Activated CD4-positive, alpha-beta T cell treated with anti-CD3 and anti-CD28 coated beads for 36 hours (primary cell): ENCODE measurements at regions of chr6 and their contacts with region 1.

Region 1: GRCh38 chr6:36623547-36624459 is 29.6 kb downstream of the SRSF3 start:
- DNase-seq: peak; percentile 86
- ATAC-seq: peak; percentile 82
- H3K4me3 Mint-ChIP-seq: no peak overlapping the region
- H3K27ac Mint-ChIP-seq: peak overlapping the region; percentile 45
- H3K4me1 Mint-ChIP-seq: peaks cover 18% of the 10 kb centered on the region
- H3K27me3 Mint-ChIP-seq: no peaks in the 10 kb centered on the region

Region 2: DNA sequence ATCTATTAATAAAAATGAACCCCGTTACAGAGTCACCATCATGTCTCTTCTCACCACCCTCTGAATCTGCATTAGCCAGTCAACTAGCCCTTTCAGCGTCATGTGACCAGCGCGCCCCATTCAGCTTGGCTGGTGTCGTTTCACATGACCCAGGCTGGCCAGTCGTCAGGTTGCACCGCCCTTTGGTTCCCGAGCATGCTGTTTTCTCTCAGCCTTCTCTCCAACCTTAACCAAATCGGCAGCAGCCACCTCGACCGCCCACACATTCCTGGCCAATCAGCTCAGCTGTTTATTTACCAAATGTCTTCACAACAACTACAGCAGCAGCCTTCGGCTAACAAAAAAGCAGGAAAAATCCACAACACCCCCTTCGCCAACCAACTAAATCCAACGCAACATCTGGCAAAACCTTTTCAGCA is 24.0 kb before region 1 on chr6:
- CTCF ChIA-PET with region 1: no interaction called
- POLR2A ChIA-PET with region 1: no interaction called
- intact Hi-C with region 1: no loop called
- DNase-seq: peak; percentile 86
- ATAC-seq: peak; percentile 91
- H3K4me3 Mint-ChIP-seq: peak overlapping the region; percentile 88
- H3K27ac Mint-ChIP-seq: peak overlapping the region; percentile 90
- H3K4me1 Mint-ChIP-seq: peaks cover 66% of the 10 kb centered on the region
- H3K27me3 Mint-ChIP-seq: no peaks in the 10 kb centered on the region

Region 3: GRCh38 chr6:36724514-36725390 is 100.9 kb after region 1 on chr6:
- CTCF ChIA-PET with region 1: interaction called, 5 read pairs
- POLR2A ChIA-PET with region 1: no interaction called
- intact Hi-C with region 1: loop called (anchors 1 to 2 kb)
- DNase-seq: peak; percentile 82
- ATAC-seq: peak; percentile 45
- H3K4me3 Mint-ChIP-seq: no peak overlapping the region
- H3K27ac Mint-ChIP-seq: no peak overlapping the region
- H3K4me1 Mint-ChIP-seq: peaks cover 25% of the 10 kb centered on the region
- H3K27me3 Mint-ChIP-seq: no peaks in the 10 kb centered on the region

Region 4: DNA sequence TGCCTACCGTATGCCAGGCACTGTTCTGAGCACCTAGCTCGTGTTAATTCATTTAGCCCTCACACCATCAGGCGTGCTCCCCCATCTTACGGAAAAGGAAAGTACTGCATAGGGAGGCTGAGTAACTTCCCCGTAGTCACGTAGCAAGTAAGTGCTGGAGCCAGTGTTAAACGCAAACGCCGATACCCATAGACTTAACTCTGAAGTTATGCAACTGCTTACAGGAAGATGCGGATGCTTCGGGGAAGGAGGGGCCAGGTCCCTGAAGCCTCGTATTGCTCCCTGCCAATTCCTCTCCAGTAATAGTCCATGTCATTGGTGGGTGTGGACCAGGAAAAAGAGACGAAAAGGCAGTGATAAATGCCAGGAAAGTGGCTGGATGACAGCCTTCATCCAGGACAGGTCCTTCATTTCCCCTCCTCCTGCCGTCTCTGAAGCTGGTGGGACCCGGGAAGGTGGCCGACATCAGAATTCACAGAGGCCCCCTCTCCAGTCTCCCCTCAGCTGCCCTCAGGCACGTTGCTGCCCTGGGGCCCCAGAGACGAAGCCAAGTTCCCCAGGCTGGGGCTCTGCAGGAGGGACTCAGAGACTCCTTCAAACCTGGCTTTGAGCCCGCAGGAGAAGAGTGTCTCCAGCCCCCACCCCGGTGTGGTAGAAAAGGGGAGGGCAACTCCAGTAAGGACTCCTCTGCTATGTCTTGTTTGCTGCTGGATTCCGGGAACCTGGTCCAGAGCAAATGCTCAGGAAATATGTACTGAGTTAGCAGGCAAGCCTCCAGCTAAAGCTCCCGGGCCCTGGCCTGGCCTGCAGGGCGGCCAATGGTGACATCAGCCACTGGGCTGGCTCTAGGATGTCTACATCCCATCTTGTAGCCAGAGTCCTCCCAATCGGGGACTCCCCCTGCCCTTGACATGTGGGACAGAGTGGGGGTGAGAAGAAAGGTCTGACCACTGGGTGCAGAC is 111.6 kb after region 1 on chr6:
- CTCF ChIA-PET with region 1: interaction called, 3 read pairs
- POLR2A ChIA-PET with region 1: no interaction called
- intact Hi-C with region 1: loop called in 1 of 2 experiments (anchors 1 kb)
- DNase-seq: peak; percentile 74
- ATAC-seq: peak; percentile 98
- H3K4me3 Mint-ChIP-seq: peak overlapping the region; percentile 55
- H3K27ac Mint-ChIP-seq: peak overlapping the region; percentile 88
- H3K4me1 Mint-ChIP-seq: peaks cover 21% of the 10 kb centered on the region
- H3K27me3 Mint-ChIP-seq: peaks cover 2% of the 10 kb centered on the region

Region 5: DNA sequence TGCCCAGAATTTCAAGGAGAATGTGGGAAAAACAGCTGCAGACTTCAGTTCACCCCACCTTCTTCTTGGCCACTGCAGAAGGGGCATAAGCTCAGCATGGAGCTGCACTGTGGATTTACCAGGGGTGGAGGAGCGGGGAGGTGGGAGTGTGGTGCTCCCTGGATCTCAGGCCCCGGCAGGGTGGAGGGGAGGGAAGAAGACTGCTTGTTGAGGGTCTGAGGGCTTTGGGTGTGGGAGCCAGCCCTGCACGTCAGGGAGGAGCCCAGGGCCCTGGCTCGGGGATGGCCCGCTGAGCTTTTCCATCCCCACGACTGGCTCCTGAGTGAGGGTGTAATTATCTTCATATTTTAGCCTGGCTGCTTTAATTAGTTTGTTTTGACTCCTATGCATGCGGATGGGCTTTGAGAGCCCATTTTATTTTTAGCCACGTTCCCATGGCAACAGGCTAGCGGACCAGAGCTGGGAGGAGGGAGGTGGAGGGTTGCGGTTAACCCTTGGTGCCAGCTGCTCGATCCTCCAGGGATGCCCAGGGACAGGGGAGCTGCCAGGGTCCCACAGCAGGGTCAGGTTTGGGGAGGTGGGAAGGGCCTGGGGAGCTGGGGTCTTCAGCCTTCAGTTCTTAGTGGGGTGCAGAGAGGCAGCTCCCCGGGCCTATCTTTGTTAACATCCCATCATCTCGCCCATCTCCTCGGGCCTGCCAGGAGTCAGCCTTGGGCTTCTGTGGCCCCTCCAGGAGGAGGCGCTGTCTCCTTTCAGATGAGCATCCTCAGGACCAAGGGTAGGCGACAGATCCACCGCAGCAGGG is 142.0 kb after region 1 on chr6:
- CTCF ChIA-PET with region 1: interaction called, 31 read pairs
- POLR2A ChIA-PET with region 1: interaction called, 3 read pairs
- intact Hi-C with region 1: no loop called
- DNase-seq: peak; percentile 92
- ATAC-seq: peak; percentile 92
- H3K4me3 Mint-ChIP-seq: no peak overlapping the region
- H3K27ac Mint-ChIP-seq: no peak overlapping the region
- H3K4me1 Mint-ChIP-seq: peaks cover 26% of the 10 kb centered on the region
- H3K27me3 Mint-ChIP-seq: no peaks in the 10 kb centered on the region

Region 6: GRCh38 chr6:36780442-36781177 is 156.8 kb after region 1 on chr6:
- CTCF ChIA-PET with region 1: interaction called, 11 read pairs
- POLR2A ChIA-PET with region 1: no interaction called
- intact Hi-C with region 1: loop called in 1 of 2 experiments (anchors 1 kb)
- DNase-seq: no peak
- ATAC-seq: no peak
- H3K4me3 Mint-ChIP-seq: no peak overlapping the region
- H3K27ac Mint-ChIP-seq: no peak overlapping the region
- H3K4me1 Mint-ChIP-seq: no peaks in the 10 kb centered on the region
- H3K27me3 Mint-ChIP-seq: no peaks in the 10 kb centered on the region